ENCODE measurements at regions of chr1 and their contacts with region 1.

Region 1: DNA sequence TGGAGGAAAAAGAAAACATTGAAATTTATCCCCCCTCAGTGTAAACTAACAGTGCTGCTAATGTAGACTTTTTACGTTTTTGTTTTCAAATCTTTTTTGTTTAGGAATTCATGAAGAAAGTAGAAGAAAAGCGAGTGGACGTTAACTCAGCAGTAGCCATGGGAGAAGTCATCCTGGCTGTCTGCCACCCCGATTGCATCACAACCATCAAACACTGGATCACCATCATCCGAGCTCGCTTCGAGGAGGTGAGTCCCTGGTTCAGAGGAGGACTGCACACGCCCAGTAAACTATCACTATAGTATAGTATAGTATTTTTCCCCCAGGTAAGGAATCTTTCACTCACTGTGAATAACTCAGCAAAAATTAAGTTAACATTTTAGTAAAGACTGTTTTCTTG is 37.8 kb upstream of the BMP8A start:
- DNase-seq: peak; percentile 33 to 49 (median 40)
- ATAC-seq: no peak
- H3K4me3 ChIP-seq: no peak overlapping the region
- H3K27ac ChIP-seq: no peak overlapping the region
- H3K4me1 ChIP-seq: no peaks in the 10 kb centered on the region
- H3K27me3 ChIP-seq: no peaks in the 10 kb centered on the region
- CTCF ChIP-seq: no peak
- POLR2A ChIP-seq: no peak

Region 2: GRCh38 chr1:39326832-39327231 is 126.8 kb before region 1 on chr1:
- intact Hi-C with region 1: loop called (anchors 10 kb)
- DNase-seq: no peak
- ATAC-seq: no peak
- H3K4me3 ChIP-seq: no peak overlapping the region
- H3K27ac ChIP-seq: no peak overlapping the region
- H3K4me1 ChIP-seq: no peaks in the 10 kb centered on the region
- H3K27me3 ChIP-seq: no peaks in the 10 kb centered on the region
- CTCF ChIP-seq: no peak
- POLR2A ChIP-seq: no peak

Measured in body of pancreas (tissue), 4 donors.